Activated CD4-positive, alpha-beta T cell treated with anti-CD3 and anti-CD28 coated beads, Interleukin-2, amount 10 ng/mL, durations not matched to agents 24 days and 14 days (primary cell): ENCODE measurements at regions of chr10 and their contacts with region 1.

Region 1: DNA sequence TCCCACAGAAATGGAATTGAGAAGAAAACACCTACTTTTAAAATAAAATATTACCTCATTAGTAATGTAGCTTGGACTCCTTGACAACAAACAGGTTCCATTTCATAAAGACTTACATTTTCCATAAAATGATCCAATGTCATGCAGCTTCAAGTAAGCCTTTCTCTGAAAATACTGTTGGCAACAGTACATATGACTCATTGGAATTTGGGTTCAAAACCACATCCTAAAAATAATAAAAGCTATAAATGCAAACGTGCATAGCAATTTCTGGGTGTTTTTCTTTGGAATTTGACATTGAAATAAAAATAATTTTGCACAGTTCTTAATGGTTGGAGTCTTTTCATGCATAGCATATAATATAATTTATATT is 47.9 kb downstream of the FHIP2A start:
- DNase-seq: no peak
- H3K4me3 Mint-ChIP-seq: no peak overlapping the region
- H3K27ac Mint-ChIP-seq: no peak overlapping the region
- H3K4me1 Mint-ChIP-seq: no peaks in the 10 kb centered on the region
- H3K27me3 Mint-ChIP-seq: peaks cover 10% of the 10 kb centered on the region

Region 2: DNA sequence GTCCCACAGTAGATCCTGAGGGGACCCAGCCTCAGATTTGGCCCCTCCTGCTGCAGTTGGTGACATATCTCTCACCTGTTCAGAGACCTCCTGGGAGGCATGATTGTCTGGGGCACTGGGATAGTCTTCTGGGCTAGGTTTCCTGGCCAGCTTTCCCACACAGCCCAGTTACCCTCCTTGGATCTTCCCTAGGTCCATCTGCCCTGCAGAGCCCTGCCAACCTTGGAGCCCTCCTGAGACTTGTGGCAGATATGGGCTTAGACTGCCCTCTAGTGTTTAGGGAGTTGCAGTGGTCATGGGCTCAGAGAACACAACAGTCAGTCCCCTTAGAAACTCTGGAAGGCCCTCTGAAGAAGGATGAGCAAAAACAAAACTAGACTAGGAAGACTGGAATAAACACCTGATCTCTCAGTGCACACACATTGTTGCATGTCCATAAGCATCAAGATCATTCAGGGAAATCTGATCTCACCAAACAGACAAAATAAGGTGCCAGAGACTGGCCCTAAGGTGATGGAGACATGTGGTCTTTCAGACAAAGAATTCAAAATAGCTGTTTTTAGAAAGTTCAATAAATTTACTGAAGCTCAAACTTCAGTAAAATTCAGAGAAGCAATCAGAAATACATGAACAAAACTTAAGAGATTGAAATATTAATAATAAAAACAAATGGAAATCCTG is 548.2 kb after region 1 on chr10:
- intact Hi-C with region 1: loop called (anchors 10 kb)
- DNase-seq: peak; percentile 65
- H3K4me3 Mint-ChIP-seq: no peak overlapping the region
- H3K27ac Mint-ChIP-seq: no peak overlapping the region
- H3K4me1 Mint-ChIP-seq: no peaks in the 10 kb centered on the region
- H3K27me3 Mint-ChIP-seq: no peaks in the 10 kb centered on the region